BJ (cell line): ENCODE measurements at regions of chr10 and their contacts with region 1.

Region 1: DNA sequence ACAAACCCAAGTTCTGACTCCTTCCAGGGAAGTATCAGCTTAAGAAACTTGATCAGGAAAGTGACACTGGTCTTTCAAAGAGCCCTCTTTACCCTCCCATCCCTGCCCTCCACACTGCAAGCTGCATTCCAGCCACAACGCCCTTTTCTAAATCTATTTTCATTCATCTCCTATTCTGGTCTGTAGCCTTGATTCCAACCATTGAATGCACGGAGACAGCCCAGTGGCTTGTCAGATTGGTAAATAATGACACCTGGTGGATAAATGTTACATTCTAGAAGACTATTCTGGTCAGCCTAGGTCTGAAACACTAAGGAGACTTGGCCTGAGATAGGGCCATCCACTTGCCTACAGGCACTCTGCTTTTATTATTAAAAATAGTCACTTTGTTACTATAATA is 20.9 kb downstream of the MORN4 start:
- DNase-seq: no peak
- H3K4me3 ChIP-seq: no peak overlapping the region
- H3K27me3 ChIP-seq: no peaks in the 10 kb centered on the region
- CTCF ChIP-seq: peak; percentile 36

Region 2: GRCh38 chr10:97376413-97376812 is 236.0 kb before region 1 on chr10:
- CTCF ChIA-PET with region 1: no interaction called
- POLR2A ChIA-PET with region 1: no interaction called
- DNase-seq: no peak
- H3K4me3 ChIP-seq: no peak overlapping the region
- H3K27me3 ChIP-seq: no peaks in the 10 kb centered on the region
- CTCF ChIP-seq: no peak

Region 3: GRCh38 chr10:97623277-97623676 is 10.9 kb after region 1 on chr10:
- CTCF ChIA-PET with region 1: interaction called, 16 read pairs
- POLR2A ChIA-PET with region 1: no interaction called
- DNase-seq: no peak
- H3K4me3 ChIP-seq: no peak overlapping the region
- H3K27me3 ChIP-seq: no peaks in the 10 kb centered on the region
- CTCF ChIP-seq: no peak